PC-3 (cell line): ENCODE measurements at regions of chr7 and their contacts with region 1.

Region 1: DNA sequence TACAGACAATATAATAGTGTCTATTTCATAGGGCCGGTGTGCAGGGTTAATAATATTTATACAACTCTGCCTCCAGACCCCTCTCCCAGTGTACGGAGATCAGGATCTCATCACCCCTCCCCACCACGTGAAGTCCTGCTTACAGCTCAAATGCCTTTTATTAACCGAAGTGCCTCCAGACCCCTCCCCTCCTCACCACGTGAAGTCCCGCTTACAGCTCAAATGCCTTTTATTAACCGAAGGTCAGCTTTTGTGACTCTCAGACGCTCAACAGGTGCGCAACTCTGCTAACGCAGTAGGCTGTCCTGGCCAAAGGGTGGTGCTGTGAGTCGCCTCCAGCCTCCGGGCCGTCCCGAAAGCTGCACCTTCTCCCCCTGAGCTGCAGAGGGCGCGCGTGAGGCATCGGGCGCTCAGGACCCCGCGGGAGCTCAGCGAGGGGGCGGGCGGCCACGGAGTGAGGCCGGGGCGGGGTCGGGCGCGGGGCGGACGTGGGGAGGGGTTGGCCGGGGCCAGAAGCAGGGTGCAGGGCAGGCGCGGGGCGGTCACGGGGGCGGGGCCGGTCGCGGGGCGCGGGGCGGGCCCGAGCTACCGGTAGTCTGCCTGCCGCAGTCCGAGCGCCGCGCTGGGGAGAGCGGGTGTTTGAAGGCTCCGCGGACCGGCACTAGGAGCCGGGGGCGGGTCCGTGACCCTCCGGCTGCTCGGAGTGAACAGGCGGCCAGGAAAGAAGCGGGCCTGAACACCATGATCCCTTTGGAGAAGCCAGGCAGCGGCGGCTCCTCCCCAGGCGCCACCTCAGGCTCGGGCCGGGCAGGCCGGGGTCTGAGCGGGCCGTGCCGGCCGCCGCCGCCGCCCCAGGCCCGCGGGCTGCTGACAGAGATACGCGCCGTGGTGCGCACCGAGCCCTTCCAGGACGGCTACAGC is at the start of gene STK17A:
- DNase-seq: peak; percentile 92
- ATAC-seq: peak; percentile 72
- H3K4me3 ChIP-seq: peak within 1 kb of the TSS; percentile 95
- H3K27ac ChIP-seq: peak within 1 kb of the TSS; percentile 74
- H3K4me1 ChIP-seq: peaks cover 25% of the 10 kb centered on the region
- H3K27me3 ChIP-seq: no peaks in the 10 kb centered on the region
- CTCF ChIP-seq: peak; percentile 94
- total RNA-seq, gene STK17A: 75.4 and 82.5 TPM in 2 replicates

Region 2: GRCh38 chr7:42766782-42767423 is 815.9 kb before region 1 on chr7:
- CTCF ChIA-PET with region 1: no interaction called
- POLR2A ChIA-PET with region 1: interaction called, 15 read pairs
- intact Hi-C with region 1: no loop called
- DNase-seq: no peak
- ATAC-seq: no peak
- H3K4me3 ChIP-seq: no peak overlapping the region
- H3K27ac ChIP-seq: no peak overlapping the region
- H3K4me1 ChIP-seq: peaks cover 26% of the 10 kb centered on the region
- H3K27me3 ChIP-seq: no peaks in the 10 kb centered on the region
- CTCF ChIP-seq: no peak

Region 3: GRCh38 chr7:43572516-43573049 is 10.2 kb before region 1 on chr7:
- CTCF ChIA-PET with region 1: interaction called, 43 read pairs
- POLR2A ChIA-PET with region 1: interaction called, 54 read pairs
- intact Hi-C with region 1: no loop called
- DNase-seq: peak; percentile 97
- ATAC-seq: peak; percentile 89
- H3K4me3 ChIP-seq: no peak overlapping the region
- H3K27ac ChIP-seq: peak overlapping the region; percentile 82
- H3K4me1 ChIP-seq: peaks cover 48% of the 10 kb centered on the region
- H3K27me3 ChIP-seq: no peaks in the 10 kb centered on the region
- CTCF ChIP-seq: no peak

Region 4: GRCh38 chr7:43625453-43625852 is 42.7 kb after region 1 on chr7:
- CTCF ChIA-PET with region 1: interaction called, 12 read pairs
- POLR2A ChIA-PET with region 1: interaction called, 10 read pairs
- intact Hi-C with region 1: no loop called
- DNase-seq: no peak
- ATAC-seq: peak; percentile 26
- H3K4me3 ChIP-seq: no peak overlapping the region
- H3K27ac ChIP-seq: no peak overlapping the region
- H3K4me1 ChIP-seq: peaks cover 22% of the 10 kb centered on the region; the same call in 1 of the 2 replicates
- H3K27me3 ChIP-seq: no peaks in the 10 kb centered on the region
- CTCF ChIP-seq: no peak

Region 5: GRCh38 chr7:43669286-43670081 is 86.7 kb after region 1 on chr7:
- CTCF ChIA-PET with region 1: interaction called, 7 read pairs
- POLR2A ChIA-PET with region 1: interaction called, 10 read pairs
- intact Hi-C with region 1: loop called (anchors 1 kb)
- DNase-seq: no peak
- ATAC-seq: no peak
- H3K4me3 ChIP-seq: no peak overlapping the region
- H3K27ac ChIP-seq: no peak overlapping the region
- H3K4me1 ChIP-seq: peaks cover 25% of the 10 kb centered on the region
- H3K27me3 ChIP-seq: no peaks in the 10 kb centered on the region
- CTCF ChIP-seq: no peak

Region 6: DNA sequence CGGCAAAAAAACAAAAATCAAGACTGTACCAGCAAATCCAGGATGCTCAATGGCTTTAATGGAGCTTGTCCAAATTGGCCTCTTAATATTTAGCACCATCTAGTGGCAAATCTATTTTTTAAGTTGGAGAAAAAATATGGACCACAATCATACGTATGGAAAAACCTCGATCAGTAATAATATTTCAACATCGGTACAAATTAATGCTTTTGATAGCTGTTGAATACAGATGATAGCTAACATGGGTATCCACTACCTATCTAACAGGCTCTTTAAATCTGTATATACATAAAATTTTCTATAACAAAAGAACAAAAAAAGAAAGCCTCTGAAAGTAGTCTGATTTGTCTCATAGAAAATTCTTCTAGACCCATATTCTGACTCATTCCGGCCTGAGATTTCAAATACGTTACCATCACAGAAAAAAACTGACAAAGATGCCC is 117.3 kb after region 1 on chr7:
- CTCF ChIA-PET with region 1: interaction called, 167 read pairs
- POLR2A ChIA-PET with region 1: interaction called, 120 read pairs
- intact Hi-C with region 1: loop called (anchors 1 kb)
- DNase-seq: peak; percentile 80
- ATAC-seq: peak; percentile 56
- H3K4me3 ChIP-seq: no peak overlapping the region
- H3K27ac ChIP-seq: no peak overlapping the region
- H3K4me1 ChIP-seq: peaks cover 29% of the 10 kb centered on the region
- H3K27me3 ChIP-seq: no peaks in the 10 kb centered on the region
- CTCF ChIP-seq: peak; percentile 85

Region 7: DNA sequence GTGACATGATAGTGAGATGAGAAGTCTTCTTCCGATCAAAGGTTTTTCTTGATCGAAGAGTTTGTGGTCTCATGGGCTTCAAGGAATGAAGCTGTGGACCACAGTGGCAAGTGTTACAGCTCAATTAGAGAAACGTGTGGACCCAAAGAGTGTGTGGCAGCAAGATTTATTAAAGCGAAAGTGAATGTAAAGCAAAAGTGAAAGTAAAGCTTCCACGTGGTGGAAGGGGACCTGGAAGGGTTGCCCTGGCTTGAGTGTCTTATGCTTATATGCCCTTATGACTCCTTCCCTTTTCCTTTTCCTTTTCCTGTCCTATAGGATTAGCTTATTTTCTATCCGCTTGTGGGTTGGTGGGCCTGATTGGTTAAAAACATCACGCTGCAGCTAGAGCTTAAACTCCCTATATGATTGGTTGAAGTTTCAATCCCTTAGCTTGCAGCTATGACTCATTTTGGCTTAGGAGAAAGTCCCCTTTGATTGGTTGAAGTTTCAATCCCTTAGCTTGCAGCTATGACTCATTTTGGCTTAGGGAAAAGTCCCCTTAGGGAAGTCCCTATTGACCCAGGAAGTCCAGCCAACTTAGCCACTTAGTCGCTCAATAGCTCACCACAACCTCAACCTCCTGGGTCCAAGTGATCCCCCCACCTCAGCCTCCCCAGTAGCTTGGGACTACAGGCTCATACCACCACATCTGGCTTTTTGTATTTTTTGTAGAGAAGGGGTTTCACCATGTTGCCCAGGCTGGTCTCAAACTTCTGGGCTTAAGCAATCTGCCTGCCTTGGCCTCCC is 251.9 kb after region 1 on chr7:
- CTCF ChIA-PET with region 1: interaction called, 14 read pairs
- POLR2A ChIA-PET with region 1: no interaction called
- intact Hi-C with region 1: loop called (anchors 1 kb)
- DNase-seq: peak; percentile 46
- ATAC-seq: no peak
- H3K4me3 ChIP-seq: no peak overlapping the region
- H3K27ac ChIP-seq: no peak overlapping the region
- H3K4me1 ChIP-seq: 0 out of 2 replicates have a peak, but pooled peaks cover 3% of the 10 kb centered on the region
- H3K27me3 ChIP-seq: no peaks in the 10 kb centered on the region
- CTCF ChIP-seq: no peak